ENCODE measurements at regions of chr9 and their contacts with region 1.

Region 1: GRCh38 chr9:132585954-132586829 is 3.8 kb downstream of the BARHL1 start:
- DNase-seq: no peak
- ATAC-seq: no peak
- H3K4me3 ChIP-seq: no peak overlapping the region
- H3K27ac ChIP-seq: no peak overlapping the region
- H3K4me1 ChIP-seq: no peaks in the 10 kb centered on the region
- H3K27me3 ChIP-seq: peaks cover 2% of the 10 kb centered on the region; the same call in 1 of the 2 replicates
- CTCF ChIP-seq: no peak

Region 2: GRCh38 chr9:132669698-132670456 is 83.7 kb after region 1 on chr9 and contains the start of gene DDX31:
- CTCF ChIA-PET with region 1: no interaction called
- POLR2A ChIA-PET with region 1: no interaction called
- in situ Hi-C with region 1: no loop called
- intact Hi-C with region 1: no loop called
- DNase-seq: no peak
- ATAC-seq: peak; percentile 95
- H3K4me3 ChIP-seq: peak within 1 kb of the TSS; percentile 71 to 83
- H3K27ac ChIP-seq: peak within 1 kb of the TSS; percentile 92
- H3K4me1 ChIP-seq: peaks cover 8% of the 10 kb centered on the region; the same call in 1 of the 2 replicates
- H3K27me3 ChIP-seq: no peaks in the 10 kb centered on the region
- CTCF ChIP-seq: no peak
- total RNA-seq, gene DDX31: 17.5 TPM

Region 3: GRCh38 chr9:133004091-133004998 is 418.2 kb after region 1 on chr9:
- CTCF ChIA-PET with region 1: interaction called, 12 read pairs
- POLR2A ChIA-PET with region 1: no interaction called
- in situ Hi-C with region 1: no loop called
- intact Hi-C with region 1: no loop called
- DNase-seq: no peak
- ATAC-seq: no peak
- H3K4me3 ChIP-seq: no peak overlapping the region
- H3K27ac ChIP-seq: no peak overlapping the region
- H3K4me1 ChIP-seq: no peaks in the 10 kb centered on the region
- H3K27me3 ChIP-seq: no peaks in the 10 kb centered on the region
- CTCF ChIP-seq: no peak